ENCODE measurements at regions of chr4 and their contacts with region 1.

Region 1: DNA sequence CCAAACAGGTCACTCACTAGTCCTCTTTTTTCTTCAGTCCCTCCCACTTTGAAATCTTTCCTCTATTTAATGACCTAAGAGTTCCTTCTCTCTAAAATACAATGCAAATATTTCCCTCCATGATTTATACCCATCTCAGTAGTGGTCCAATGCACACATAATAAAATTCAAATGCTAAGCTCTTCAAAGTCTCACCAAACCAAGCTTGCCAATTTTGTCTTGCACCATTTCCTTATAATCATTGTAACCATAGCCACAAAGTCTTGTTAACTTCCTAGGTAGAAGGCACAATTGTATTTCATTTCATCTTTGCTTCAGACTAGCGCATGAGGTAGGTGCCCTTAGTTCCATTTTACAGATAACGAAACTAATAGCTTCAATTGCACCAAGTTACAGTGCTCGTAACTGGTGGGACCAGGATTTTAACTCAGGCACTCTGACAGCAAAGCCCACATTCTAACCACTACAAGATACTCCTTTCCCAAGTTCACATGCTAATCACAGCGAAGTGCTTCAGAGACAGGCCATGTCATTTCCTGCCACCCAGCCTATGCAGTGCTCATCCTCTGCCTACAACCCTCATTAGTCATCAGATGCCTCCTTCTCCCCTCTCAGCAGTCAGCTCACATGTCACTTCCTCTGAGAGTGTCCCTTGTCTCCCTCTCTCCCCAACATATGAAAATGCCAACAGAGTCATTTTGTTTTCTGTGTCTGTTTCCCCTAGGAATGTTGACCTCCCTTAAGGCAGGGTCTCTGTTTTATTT is 66.9 kb upstream of the PPARGC1A start:
- DNase-seq: no peak
- ATAC-seq: no peak
- H3K4me3 ChIP-seq: no peak overlapping the region
- H3K27ac ChIP-seq: no peak overlapping the region
- H3K4me1 ChIP-seq: peaks cover 0 to 3% of the 10 kb centered on the region in 2 donors
- H3K27me3 ChIP-seq: no peaks in the 10 kb centered on the region
- CTCF ChIP-seq: no peak
- POLR2A ChIP-seq: no peak

Region 2: GRCh38 chr4:23759066-23759465 is 197.7 kb before region 1 on chr4:
- in situ Hi-C with region 1: no loop called
- intact Hi-C with region 1: loop called (anchors 5 kb)
- DNase-seq: no peak
- ATAC-seq: no peak
- H3K4me3 ChIP-seq: no peak overlapping the region
- H3K27ac ChIP-seq: no peak overlapping the region
- H3K4me1 ChIP-seq: no peaks in the 10 kb centered on the region
- H3K27me3 ChIP-seq: no peaks in the 10 kb centered on the region
- CTCF ChIP-seq: no peak
- POLR2A ChIP-seq: no peak

Region 3: DNA sequence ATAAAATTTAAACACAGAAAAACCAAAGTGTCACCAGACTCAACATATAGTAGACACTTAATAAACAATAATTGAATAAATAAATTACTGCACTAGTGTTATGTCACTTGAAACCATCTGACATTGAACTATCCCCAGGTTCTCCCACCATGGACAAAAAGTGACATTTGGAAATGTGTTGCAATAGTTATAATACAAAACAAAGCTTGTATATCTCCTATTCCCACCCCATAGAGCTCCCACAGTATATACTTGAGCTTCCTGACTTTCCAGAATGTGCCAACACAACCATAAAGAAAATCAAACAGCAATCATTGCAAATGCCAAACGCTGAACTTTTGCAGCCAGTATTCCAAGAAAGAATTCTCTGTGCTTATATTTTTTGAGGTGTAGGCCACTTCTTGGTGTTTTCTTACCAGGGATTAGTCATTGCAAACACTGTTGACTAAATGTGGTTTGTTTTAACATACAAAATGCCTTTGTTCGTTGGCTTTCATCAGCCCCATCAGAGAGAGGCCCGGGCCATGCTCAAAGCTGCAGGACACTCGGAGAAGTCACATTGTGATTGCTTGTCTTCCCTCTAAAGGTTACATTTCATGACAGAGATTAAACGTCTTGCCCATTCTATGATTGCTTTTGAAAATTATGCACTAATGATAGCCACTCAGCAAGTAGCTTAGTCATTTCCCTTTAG is 100.7 kb before region 1 on chr4:
- in situ Hi-C with region 1: no loop called
- intact Hi-C with region 1: no loop called
- DNase-seq: no peak
- ATAC-seq: no peak
- H3K4me3 ChIP-seq: no peak overlapping the region
- H3K27ac ChIP-seq: peak overlapping the region; percentile 57 to 71 (median 63)
- H3K4me1 ChIP-seq: peaks cover 73 to 80% of the 10 kb centered on the region in 2 donors
- H3K27me3 ChIP-seq: no peaks in the 10 kb centered on the region
- CTCF ChIP-seq: no peak
- POLR2A ChIP-seq: no peak